Colonic mucosa (tissue), 4 donors: ENCODE measurements at regions of chr12 and their contacts with region 1.

Region 1: GRCh38 chr12:67222302-67222701 is 46.9 kb upstream of the CAND1 start:
- DNase-seq: no peak
- H3K4me3 ChIP-seq: no peak overlapping the region
- H3K27ac ChIP-seq: no peak overlapping the region
- H3K4me1 ChIP-seq: no peaks in the 10 kb centered on the region
- H3K27me3 ChIP-seq: no peaks in the 10 kb centered on the region
- CTCF ChIP-seq: no peak

Region 2: DNA sequence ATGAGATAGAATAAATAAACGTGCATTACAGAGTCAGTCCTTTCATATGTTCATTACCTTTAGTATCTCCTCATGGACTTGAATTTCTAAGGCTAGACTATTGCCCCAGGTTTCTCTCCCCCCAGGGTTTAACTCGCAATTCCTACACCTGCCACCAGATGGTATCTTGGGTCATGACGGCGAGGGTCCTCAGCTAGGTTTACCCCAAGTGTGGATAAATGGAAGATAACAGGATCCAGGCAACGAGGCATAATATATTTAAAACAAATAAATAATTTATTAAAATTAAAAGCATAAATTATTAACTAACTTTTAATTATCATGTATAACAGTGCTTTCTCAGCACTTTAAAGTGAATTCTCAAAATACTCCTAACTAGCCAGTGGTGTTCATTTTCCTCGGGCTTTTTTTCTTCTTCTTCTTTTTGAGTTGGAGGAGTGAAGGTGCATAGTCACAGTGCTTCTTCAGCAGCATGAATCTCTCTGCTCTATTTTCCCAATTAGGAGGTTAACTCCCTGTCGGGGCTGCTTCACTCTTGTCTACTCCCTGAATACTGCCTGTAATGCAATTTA is 196.7 kb before region 1 on chr12:
- intact Hi-C with region 1: loop called (anchors 5 kb)
- DNase-seq: peak; percentile 40
- H3K4me3 ChIP-seq: no peak overlapping the region
- H3K27ac ChIP-seq: no peak overlapping the region
- H3K4me1 ChIP-seq: no peaks in the 10 kb centered on the region
- H3K27me3 ChIP-seq: no peaks in the 10 kb centered on the region
- CTCF ChIP-seq: peak; percentile 63